Gastrocnemius medialis (tissue), 4 donors: ENCODE measurements at regions of chr5 and their contacts with region 1.

Region 1: GRCh38 chr5:171635561-171636245 is 149.9 kb upstream of the SMIM23 start:
- DNase-seq: no peak
- ATAC-seq: no peak
- H3K4me3 ChIP-seq: no peak overlapping the region
- H3K27ac ChIP-seq: no peak overlapping the region
- H3K4me1 ChIP-seq: peaks cover 0 to 13% of the 10 kb centered on the region in 2 donors
- H3K27me3 ChIP-seq: no peaks in the 10 kb centered on the region
- CTCF ChIP-seq: no peak
- POLR2A ChIP-seq: no peak

Region 2: DNA sequence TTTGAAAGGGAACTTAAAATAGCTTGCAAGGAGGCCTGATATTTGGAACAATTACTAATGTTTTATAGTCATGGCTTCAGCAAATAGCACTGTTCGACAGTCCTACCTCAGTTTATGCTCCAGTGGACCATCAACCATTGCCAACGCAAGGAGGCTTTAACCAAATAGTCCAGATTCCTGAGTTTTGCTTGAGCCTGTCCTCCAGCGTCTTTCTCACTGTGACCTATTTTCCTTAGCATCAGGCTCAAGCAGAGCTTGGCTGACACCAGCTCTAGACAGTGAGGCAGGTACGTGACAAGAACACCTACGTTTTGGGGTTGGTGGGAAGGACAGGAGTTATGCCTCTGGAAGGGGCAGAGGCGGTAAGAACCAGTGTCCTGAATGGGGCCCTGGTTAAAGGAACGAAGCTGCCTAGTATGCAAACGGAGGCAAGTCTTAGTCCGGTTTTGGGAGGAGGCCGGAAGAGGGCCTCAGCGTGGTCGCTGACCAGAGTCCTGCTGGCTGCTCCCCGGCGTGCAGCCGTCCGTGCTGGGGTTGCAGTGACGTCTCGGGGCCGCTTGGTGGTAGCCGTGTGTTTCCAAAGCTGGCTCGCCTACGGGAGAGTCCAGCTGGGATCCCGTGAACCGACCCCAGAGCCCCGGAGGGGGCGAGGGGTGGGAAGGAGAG is 217.3 kb before region 1 on chr5:
- in situ Hi-C with region 1: no loop called
- intact Hi-C with region 1: no loop called
- DNase-seq: peak; percentile 37 to 63
- ATAC-seq: peak; percentile 71 to 83
- H3K4me3 ChIP-seq: peak overlapping the region; percentile 39 to 51 (median 46)
- H3K27ac ChIP-seq: no peak overlapping the region
- H3K4me1 ChIP-seq: peaks cover 20 to 21% of the 10 kb centered on the region in 2 donors
- H3K27me3 ChIP-seq: peaks cover 0 to 6% (median 0%) of the 10 kb centered on the region in 3 donors
- CTCF ChIP-seq: peak; percentile 79 to 94 (median 91)
- POLR2A ChIP-seq: no peak

Region 3: DNA sequence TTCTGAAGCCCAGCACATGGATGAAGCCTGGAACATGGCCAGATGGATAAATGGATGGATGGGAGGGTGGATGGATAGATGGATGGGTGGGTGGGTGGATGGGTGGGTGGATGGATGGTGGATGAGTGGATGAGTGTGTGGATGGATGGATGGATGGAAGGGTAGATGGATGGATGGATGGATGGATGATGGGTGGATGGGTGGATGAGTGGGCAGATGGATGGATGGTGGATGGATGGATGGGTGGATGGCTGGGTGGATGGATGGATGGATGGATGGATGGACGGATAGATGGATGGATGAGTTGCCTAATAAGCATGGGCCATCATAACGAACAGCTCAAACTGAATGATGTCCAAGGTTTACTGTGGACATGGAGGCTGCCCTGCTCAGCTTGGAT is 60.1 kb after region 1 on chr5:
- in situ Hi-C with region 1: no loop called
- intact Hi-C with region 1: loop called (anchors 2 kb)
- DNase-seq: no peak
- ATAC-seq: no peak
- H3K4me3 ChIP-seq: no peak overlapping the region
- H3K27ac ChIP-seq: no peak overlapping the region
- H3K4me1 ChIP-seq: no peaks in the 10 kb centered on the region
- H3K27me3 ChIP-seq: no peaks in the 10 kb centered on the region
- CTCF ChIP-seq: no peak
- POLR2A ChIP-seq: no peak